ENCODE measurements at regions of chr6 and their contacts with region 1.

Region 1: DNA sequence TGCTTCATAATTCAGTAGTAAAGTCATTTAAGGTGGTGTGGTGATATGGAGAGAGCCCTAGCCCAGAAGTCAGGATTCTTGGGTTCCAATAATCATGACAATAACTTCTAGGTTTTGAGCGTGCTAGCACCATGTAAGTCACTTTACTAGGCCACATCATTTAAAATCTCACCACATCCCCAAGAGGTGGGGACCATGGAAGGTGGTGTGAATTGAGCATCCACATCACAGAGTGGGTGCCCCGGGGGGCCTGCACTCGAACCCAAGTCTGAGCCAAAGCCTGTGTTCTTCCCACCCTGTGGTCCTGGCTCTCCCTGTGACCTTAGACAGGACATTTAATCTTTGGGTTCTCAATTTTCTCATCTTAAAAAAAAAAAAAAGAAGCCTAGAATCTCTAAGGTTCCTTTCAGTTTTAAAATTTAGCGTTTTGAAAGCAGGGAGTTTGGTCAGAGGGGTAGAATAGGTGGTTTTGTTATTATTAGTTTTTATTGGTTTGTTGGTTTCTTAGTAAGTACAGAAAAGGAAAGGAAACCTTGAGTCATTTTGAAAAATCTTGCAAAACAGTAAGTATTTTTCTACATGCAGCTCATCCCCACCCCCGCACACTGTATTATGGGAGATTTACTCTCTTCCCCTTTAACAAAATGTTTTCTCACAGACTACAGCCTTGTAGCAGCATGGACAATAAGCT is 26.4 kb downstream of the ARMC2 start:
- DNase-seq: peak; percentile 79
- ATAC-seq: peak; percentile 87
- H3K4me3 Mint-ChIP-seq: peak overlapping the region; percentile 51
- H3K27ac Mint-ChIP-seq: peak overlapping the region; percentile 89
- H3K4me1 Mint-ChIP-seq: peaks cover 41% of the 10 kb centered on the region
- H3K27me3 Mint-ChIP-seq: peaks cover 8% of the 10 kb centered on the region

Region 2: GRCh38 chr6:107820338-107821261 is 1054.0 kb before region 1 on chr6:
- CTCF ChIA-PET with region 1: no interaction called
- POLR2A ChIA-PET with region 1: no interaction called
- intact Hi-C with region 1: loop called in 1 of 2 experiments (anchors 10 kb)
- DNase-seq: peak; percentile 60
- ATAC-seq: no peak
- H3K4me3 Mint-ChIP-seq: peak overlapping the region; percentile 87
- H3K27ac Mint-ChIP-seq: peak overlapping the region; percentile 98
- H3K4me1 Mint-ChIP-seq: peaks cover 84% of the 10 kb centered on the region
- H3K27me3 Mint-ChIP-seq: no peaks in the 10 kb centered on the region

Region 3: DNA sequence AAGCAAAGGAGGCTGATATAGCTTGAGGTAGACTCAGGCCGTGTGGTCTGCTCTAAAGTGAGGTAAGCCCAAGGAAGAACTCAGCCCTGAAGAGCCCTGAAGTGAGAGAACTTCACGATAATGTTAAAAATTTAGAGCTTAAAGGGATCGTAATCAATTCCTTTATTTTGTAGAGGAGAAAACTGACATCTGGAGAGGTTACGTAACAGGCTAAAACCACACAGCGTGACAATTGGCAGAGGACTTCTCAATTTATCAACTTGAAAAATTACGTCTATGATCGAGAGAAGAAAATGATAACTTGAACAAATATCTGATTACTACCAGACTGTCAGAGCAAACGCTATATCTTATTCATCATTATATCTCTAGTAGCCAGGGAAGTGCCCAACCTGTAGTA is 435.7 kb before region 1 on chr6:
- CTCF ChIA-PET with region 1: no interaction called
- POLR2A ChIA-PET with region 1: no interaction called
- intact Hi-C with region 1: loop called (anchors 2 kb)
- DNase-seq: no peak
- ATAC-seq: no peak
- H3K4me3 Mint-ChIP-seq: no peak overlapping the region
- H3K27ac Mint-ChIP-seq: no peak overlapping the region
- H3K4me1 Mint-ChIP-seq: peaks cover 3% of the 10 kb centered on the region
- H3K27me3 Mint-ChIP-seq: peaks cover 38% of the 10 kb centered on the region

Region 4: GRCh38 chr6:108848116-108848868 is 26.3 kb before region 1 on chr6 and contains the start of gene ARMC2:
- CTCF ChIA-PET with region 1: no interaction called
- POLR2A ChIA-PET with region 1: interaction called, 3 read pairs
- intact Hi-C with region 1: loop called in 1 of 2 experiments (anchors 1 kb)
- DNase-seq: peak; percentile 91
- ATAC-seq: peak; percentile 93
- H3K4me3 Mint-ChIP-seq: peak within 1 kb of the TSS; percentile 78
- H3K27ac Mint-ChIP-seq: peak within 1 kb of the TSS; percentile 74
- H3K4me1 Mint-ChIP-seq: peaks cover 23% of the 10 kb centered on the region
- H3K27me3 Mint-ChIP-seq: no peaks in the 10 kb centered on the region
- total RNA-seq, gene ARMC2: 3.9 to 5.2 TPM

Region 5: DNA sequence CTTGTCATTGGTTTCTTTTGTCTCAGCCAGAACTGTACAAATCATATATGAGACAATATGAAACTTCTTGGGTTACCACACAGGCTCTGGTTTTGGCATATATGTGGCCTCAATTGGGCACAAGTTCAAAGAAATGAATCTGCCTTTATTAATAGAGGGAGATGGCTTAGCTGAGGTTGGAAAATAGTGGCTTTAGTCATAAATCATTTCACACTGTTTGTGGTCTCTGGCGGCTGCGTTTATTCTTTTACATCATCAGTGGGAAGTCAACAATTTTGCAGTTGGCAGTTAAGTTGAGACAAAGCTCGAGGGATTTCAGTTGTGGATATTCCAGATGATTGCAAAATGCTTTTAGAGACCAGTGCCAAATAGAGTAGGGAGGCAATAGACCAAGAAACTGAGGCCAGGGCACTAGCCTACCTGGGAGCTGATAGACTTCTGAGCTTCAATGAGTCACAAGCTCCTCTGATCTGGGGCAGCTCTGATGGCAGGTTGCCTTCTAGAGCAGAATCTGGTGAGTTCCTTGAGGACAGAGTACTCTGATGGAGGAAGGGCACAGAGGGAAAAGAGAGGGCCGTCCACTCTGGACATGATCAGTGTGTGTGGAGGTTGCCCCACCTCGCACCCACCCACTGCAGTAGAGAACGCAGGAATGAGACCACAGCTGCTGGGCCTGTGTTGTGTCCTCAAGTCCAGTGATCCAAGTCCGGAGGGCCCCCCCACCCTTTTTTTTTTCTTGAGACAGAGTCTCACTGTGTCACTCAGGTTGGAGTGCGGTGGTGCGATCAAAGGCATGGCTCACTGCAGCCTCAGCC is 47.1 kb after region 1 on chr6:
- CTCF ChIA-PET with region 1: interaction called, 6 read pairs
- POLR2A ChIA-PET with region 1: no interaction called
- intact Hi-C with region 1: loop called (anchors 1 kb)
- DNase-seq: peak; percentile 58
- ATAC-seq: peak; percentile 91
- H3K4me3 Mint-ChIP-seq: no peak overlapping the region
- H3K27ac Mint-ChIP-seq: peak overlapping the region; percentile 26
- H3K4me1 Mint-ChIP-seq: peaks cover 33% of the 10 kb centered on the region
- H3K27me3 Mint-ChIP-seq: peaks cover 7% of the 10 kb centered on the region

Region 6: GRCh38 chr6:108983151-108983550 is 108.5 kb after region 1 on chr6:
- CTCF ChIA-PET with region 1: no interaction called
- POLR2A ChIA-PET with region 1: no interaction called
- intact Hi-C with region 1: no loop called
- DNase-seq: no peak
- ATAC-seq: no peak
- H3K4me3 Mint-ChIP-seq: no peak overlapping the region
- H3K27ac Mint-ChIP-seq: no peak overlapping the region
- H3K4me1 Mint-ChIP-seq: no peaks in the 10 kb centered on the region
- H3K27me3 Mint-ChIP-seq: no peaks in the 10 kb centered on the region

Measured in activated CD4-positive, alpha-beta T cell treated with anti-CD3 and anti-CD28 coated beads for 36 hours (primary cell).